Heart left ventricle (tissue), 16 donors: ENCODE measurements at regions of chr1 and their contacts with region 1.

Region 1: GRCh38 chr1:45583264-45583665 is 576 bp upstream of the NASP start:
- DNase-seq: peak; percentile 95 to 97 (median 96)
- ATAC-seq: peak; percentile 90 to 95 (median 94)
- H3K4me3 ChIP-seq: peak overlapping the region; percentile 78 to 99 (median 93)
- H3K27ac ChIP-seq: peak overlapping the region; percentile 81 to 96 (median 92)
- H3K4me1 ChIP-seq: peaks cover 0 to 37% (median 18%) of the 10 kb centered on the region in 12 donors
- H3K27me3 ChIP-seq: no peaks in the 10 kb centered on the region
- CTCF ChIP-seq: no peak
- POLR2A ChIP-seq: no peak

Region 2: DNA sequence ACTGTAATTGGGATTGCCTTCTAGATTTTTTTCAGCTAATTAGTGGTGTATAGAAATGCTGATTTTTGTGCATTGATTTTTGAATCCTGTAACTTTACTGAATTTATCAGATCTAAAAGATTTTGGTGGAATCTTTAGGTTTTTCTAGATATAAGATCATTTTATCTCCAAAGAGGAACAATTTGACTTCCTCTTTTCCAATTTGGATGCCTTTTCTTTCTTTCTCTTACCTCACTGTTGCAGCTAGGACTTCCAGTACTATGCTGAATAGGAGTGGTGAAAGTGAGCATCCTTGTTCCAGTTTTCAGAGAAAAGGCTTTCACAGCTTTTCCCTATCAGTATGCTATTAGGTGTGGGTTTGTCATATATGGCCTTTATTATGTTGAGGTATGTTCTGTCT is 145.9 kb before region 1 on chr1:
- intact Hi-C with region 1: no loop called
- DNase-seq: no peak
- ATAC-seq: no peak
- H3K4me3 ChIP-seq: no peak overlapping the region
- H3K27ac ChIP-seq: no peak overlapping the region
- H3K4me1 ChIP-seq: peaks cover 0 to 5% (median 0%) of the 10 kb centered on the region in 12 donors
- H3K27me3 ChIP-seq: no peaks in the 10 kb centered on the region
- CTCF ChIP-seq: no peak
- POLR2A ChIP-seq: no peak

Region 3: GRCh38 chr1:45499415-45499769 is 83.9 kb before region 1 on chr1:
- intact Hi-C with region 1: loop called in 1 of 10 experiments (anchors 1 kb)
- DNase-seq: no peak
- ATAC-seq: peak in 1 of 4 donors; percentile 1
- H3K4me3 ChIP-seq: peak overlapping the region; percentile 24 to 83 (median 68)
- H3K27ac ChIP-seq: peak overlapping the region in 8 of 12 donors; percentile 19 to 76 (median 55)
- H3K4me1 ChIP-seq: peaks cover 0 to 27% (median 14%) of the 10 kb centered on the region in 12 donors
- H3K27me3 ChIP-seq: no peaks in the 10 kb centered on the region
- CTCF ChIP-seq: peak in 1 of 12 donors; percentile 3
- POLR2A ChIP-seq: no peak

Region 4: GRCh38 chr1:45803301-45803780 is 220.1 kb after region 1 on chr1 and contains the start of gene MAST2:
- intact Hi-C with region 1: loop called in 1 of 10 experiments (anchors 5 kb)
- DNase-seq: peak; percentile 90 to 96 (median 92)
- ATAC-seq: peak; percentile 90 to 98 (median 96)
- H3K4me3 ChIP-seq: peak within 1 kb of the TSS; percentile 22 to 67 (median 61)
- H3K27ac ChIP-seq: peak within 1 kb of the TSS in 11 of 12 donors; percentile 44 to 87 (median 79)
- H3K4me1 ChIP-seq: peaks cover 0 to 27% (median 21%) of the 10 kb centered on the region in 12 donors
- H3K27me3 ChIP-seq: no peaks in the 10 kb centered on the region
- CTCF ChIP-seq: no peak
- POLR2A ChIP-seq: peak; percentile 15 to 82
- total RNA-seq, gene MAST2: 70.2 to 123 (median 79.7) TPM